ENCODE measurements at regions of chr19 and their contacts with region 1.

Region 1: DNA sequence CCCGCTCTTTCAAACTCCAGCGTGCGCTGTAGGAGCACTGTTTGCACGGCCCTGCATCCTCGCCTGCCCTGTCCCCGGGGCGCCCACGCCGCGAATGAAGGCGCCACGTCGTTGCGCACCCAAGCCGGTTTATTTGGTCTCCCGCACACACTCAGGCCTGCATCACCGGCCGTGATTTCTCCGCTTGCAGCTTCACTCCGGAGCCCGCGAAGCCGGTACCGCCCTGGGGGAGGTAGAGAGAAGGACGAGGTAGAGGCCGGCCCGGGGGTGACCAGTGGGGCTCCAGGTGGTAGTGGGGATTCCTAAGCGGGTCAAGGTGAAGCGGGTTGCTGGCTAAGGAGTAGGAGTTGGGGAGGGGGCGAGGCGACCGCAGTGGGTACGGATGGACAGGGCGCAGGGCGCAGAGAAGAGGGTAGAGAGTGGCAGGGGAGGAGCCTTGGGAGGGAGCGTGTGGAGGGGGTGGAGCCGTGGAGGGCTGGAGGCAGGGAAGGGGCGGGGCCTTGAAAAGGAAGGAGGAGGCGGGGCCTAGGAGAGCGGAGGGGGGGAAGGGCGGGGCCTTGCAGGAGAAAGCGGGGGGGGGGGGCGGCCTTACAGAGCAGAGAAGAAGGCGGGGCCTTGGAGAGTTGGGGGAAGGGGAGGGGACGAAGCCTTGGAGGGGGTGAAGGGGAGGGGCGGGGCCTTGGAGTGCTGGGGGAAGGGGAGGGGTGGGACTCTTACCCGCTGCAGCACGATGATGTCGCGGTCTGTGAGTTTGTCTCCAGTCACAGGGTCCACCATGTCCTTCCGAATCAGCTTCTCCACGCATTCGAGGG is 24.6 kb downstream of the NOSIP start:
- DNase-seq: no peak
- H3K4me3 Mint-ChIP-seq: no peak overlapping the region
- H3K27ac Mint-ChIP-seq: no peak overlapping the region
- H3K4me1 Mint-ChIP-seq: peaks cover 12% of the 10 kb centered on the region
- H3K27me3 Mint-ChIP-seq: no peaks in the 10 kb centered on the region
- CTCF ChIP-seq: no peak

Region 2: GRCh38 chr19:49255674-49256073 is 300.1 kb before region 1 on chr19:
- CTCF ChIA-PET with region 1: no interaction called
- POLR2A ChIA-PET with region 1: no interaction called
- intact Hi-C with region 1: no loop called
- DNase-seq: no peak
- H3K4me3 Mint-ChIP-seq: no peak overlapping the region
- H3K27ac Mint-ChIP-seq: no peak overlapping the region
- H3K4me1 Mint-ChIP-seq: no peaks in the 10 kb centered on the region
- H3K27me3 Mint-ChIP-seq: no peaks in the 10 kb centered on the region
- CTCF ChIP-seq: no peak

Region 3: DNA sequence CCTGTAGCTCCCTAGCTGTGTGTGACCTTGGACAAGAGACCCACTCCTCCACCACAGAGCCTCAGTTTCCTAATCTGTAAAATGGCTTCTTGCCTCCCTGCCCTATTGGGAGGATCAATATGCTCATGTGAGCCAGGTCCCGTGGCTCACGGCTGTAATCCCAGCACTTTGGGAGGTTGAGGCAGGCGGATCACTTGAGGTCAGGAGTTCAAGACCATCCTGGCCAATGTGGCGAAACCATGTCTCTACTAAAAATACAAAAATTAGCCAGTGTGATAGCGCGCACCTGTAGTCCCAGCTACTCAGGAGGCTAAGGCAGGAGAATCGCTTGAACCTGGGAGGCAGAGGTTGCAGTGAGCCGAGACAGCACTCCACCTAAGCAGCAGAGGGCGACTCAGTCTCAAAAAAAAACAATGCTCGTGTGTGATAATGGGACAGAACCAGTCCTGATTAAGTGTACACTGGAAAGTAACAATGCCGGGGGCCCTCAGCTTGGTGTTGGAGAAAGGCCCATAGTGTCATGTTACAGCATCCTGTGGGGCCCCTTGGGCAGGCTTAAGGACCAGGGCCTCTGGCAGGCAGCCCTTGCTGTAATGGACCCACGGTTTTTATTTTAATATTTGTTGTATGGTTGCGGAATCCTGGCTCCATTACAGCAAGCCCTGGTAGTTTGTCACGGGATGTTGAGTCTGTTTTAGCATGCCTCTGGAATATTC is 52.8 kb before region 1 on chr19:
- CTCF ChIA-PET with region 1: interaction called, 10 read pairs
- POLR2A ChIA-PET with region 1: interaction called, 4 read pairs
- intact Hi-C with region 1: no loop called
- DNase-seq: peak; percentile 73
- H3K4me3 Mint-ChIP-seq: no peak overlapping the region
- H3K27ac Mint-ChIP-seq: no peak overlapping the region
- H3K4me1 Mint-ChIP-seq: peaks cover 6% of the 10 kb centered on the region
- H3K27me3 Mint-ChIP-seq: no peaks in the 10 kb centered on the region
- CTCF ChIP-seq: peak; percentile 44

Region 4: GRCh38 chr19:49712397-49712859 is 156.6 kb after region 1 on chr19:
- CTCF ChIA-PET with region 1: no interaction called
- POLR2A ChIA-PET with region 1: no interaction called
- intact Hi-C with region 1: no loop called
- DNase-seq: peak; percentile 84
- H3K4me3 Mint-ChIP-seq: no peak overlapping the region
- H3K27ac Mint-ChIP-seq: no peak overlapping the region
- H3K4me1 Mint-ChIP-seq: no peaks in the 10 kb centered on the region
- H3K27me3 Mint-ChIP-seq: no peaks in the 10 kb centered on the region
- CTCF ChIP-seq: no peak